Activated T-helper 1 cell treated with anti-CD3 and anti-CD28 coated beads, Interleukin-12 subunit alpha, Interleukin-12 subunit beta, Interleukin-2, Interleukin-4 antibody, amounts not matched to agents 30 ng/mL and 10 ng/mL and 1 ng/mL, durations not matched to agents 14 hours and 24 hours and 36 hours (primary cell): ENCODE measurements at regions of chr2 and their contacts with region 1.

Region 1: GRCh38 chr2:118046634-118047210 is 32.9 kb upstream of the CCDC93 start:
- DNase-seq: no peak
- H3K4me3 Mint-ChIP-seq: no peak overlapping the region
- H3K27ac Mint-ChIP-seq: no peak overlapping the region
- H3K4me1 Mint-ChIP-seq: peaks cover 6% of the 10 kb centered on the region
- H3K27me3 Mint-ChIP-seq: peaks cover 15% of the 10 kb centered on the region

Region 2: GRCh38 chr2:117972425-117973138 is 74.1 kb before region 1 on chr2:
- intact Hi-C with region 1: no loop called
- DNase-seq: no peak
- H3K4me3 Mint-ChIP-seq: no peak overlapping the region
- H3K27ac Mint-ChIP-seq: peak overlapping the region; percentile 5
- H3K4me1 Mint-ChIP-seq: no peaks in the 10 kb centered on the region
- H3K27me3 Mint-ChIP-seq: no peaks in the 10 kb centered on the region

Region 3: GRCh38 chr2:118061135-118061955 is 14.6 kb after region 1 on chr2:
- intact Hi-C with region 1: loop called (anchors 2 kb)
- DNase-seq: no peak
- H3K4me3 Mint-ChIP-seq: no peak overlapping the region
- H3K27ac Mint-ChIP-seq: no peak overlapping the region
- H3K4me1 Mint-ChIP-seq: peaks cover 13% of the 10 kb centered on the region
- H3K27me3 Mint-ChIP-seq: peaks cover 9% of the 10 kb centered on the region

Region 4: GRCh38 chr2:118148809-118149208 is 102.1 kb after region 1 on chr2:
- intact Hi-C with region 1: loop called (anchors 1 kb)
- DNase-seq: no peak
- H3K4me3 Mint-ChIP-seq: no peak overlapping the region
- H3K27ac Mint-ChIP-seq: no peak overlapping the region
- H3K4me1 Mint-ChIP-seq: no peaks in the 10 kb centered on the region
- H3K27me3 Mint-ChIP-seq: peaks cover 8% of the 10 kb centered on the region

Region 5: GRCh38 chr2:118186110-118186857 is 139.6 kb after region 1 on chr2:
- intact Hi-C with region 1: loop called (anchors 2 kb)
- DNase-seq: peak; percentile 83
- H3K4me3 Mint-ChIP-seq: peak overlapping the region; percentile 90
- H3K27ac Mint-ChIP-seq: peak overlapping the region; percentile 98
- H3K4me1 Mint-ChIP-seq: peaks cover 53% of the 10 kb centered on the region
- H3K27me3 Mint-ChIP-seq: no peaks in the 10 kb centered on the region

Region 6: DNA sequence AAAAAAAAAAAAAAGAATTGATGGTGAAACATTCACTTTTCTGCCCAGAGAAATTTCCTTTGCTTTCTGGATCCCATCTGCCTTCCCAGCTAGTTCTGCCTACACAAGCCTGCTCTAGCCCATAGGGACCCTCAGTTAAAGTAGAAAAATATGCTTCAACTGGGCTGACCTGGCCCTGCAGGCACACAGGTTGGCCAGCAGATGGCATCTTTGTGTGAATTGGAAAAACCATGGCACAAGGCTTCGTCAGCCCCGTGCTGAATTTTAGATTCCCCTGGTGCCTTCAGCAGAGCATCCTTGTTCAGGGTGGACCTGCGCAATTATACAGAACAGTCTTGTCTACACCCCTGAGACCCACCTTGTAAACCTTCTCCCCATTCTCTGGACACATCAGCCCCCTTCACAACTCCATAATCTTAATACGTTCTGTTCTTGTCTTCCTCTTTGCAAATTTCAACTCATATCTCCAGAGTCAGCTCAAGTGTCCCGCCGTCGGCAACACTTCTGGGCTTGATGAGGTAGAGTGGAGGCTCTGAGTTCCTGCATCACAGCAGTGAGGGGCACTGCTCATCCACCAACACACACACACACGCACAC is 156.1 kb after region 1 on chr2:
- intact Hi-C with region 1: loop called (anchors 1 kb)
- DNase-seq: peak; percentile 38
- H3K4me3 Mint-ChIP-seq: no peak overlapping the region
- H3K27ac Mint-ChIP-seq: no peak overlapping the region
- H3K4me1 Mint-ChIP-seq: peaks cover 7% of the 10 kb centered on the region
- H3K27me3 Mint-ChIP-seq: peaks cover 2% of the 10 kb centered on the region

Region 7: GRCh38 chr2:118221666-118222594 is 175.2 kb after region 1 on chr2:
- intact Hi-C with region 1: loop called (anchors 1 kb)
- DNase-seq: peak; percentile 40
- H3K4me3 Mint-ChIP-seq: no peak overlapping the region
- H3K27ac Mint-ChIP-seq: no peak overlapping the region
- H3K4me1 Mint-ChIP-seq: peaks cover 40% of the 10 kb centered on the region
- H3K27me3 Mint-ChIP-seq: peaks cover 54% of the 10 kb centered on the region

Region 8: DNA sequence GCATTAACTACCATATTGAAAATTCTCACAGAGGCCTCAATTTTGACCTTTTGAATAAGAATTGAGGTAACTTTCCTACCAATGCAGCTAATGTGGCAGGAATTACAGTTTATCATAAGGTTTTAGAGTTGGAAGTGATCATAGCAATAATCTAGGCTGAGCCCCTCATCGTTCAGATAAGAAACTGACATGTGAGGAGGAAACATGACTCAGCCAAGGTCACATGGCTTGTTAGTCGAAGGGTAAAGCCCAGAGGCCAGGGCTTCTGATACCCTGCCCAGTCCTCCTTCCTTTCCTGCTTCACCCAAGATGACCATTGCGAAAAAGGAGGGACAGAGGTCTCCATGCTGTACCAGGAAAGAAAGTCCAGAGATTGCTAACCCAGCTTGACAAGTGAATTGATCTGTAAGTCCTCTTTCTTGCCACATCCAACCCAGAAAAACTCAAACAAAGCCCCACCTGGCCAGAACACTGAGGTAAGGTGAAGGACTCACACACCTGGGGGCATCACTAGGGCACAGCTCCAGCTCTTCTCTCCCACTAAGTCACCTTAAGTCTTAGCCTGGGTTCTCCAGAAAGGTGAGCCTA is 625.9 kb after region 1 on chr2:
- intact Hi-C with region 1: no loop called
- DNase-seq: no peak
- H3K4me3 Mint-ChIP-seq: no peak overlapping the region
- H3K27ac Mint-ChIP-seq: no peak overlapping the region
- H3K4me1 Mint-ChIP-seq: no peaks in the 10 kb centered on the region
- H3K27me3 Mint-ChIP-seq: peaks cover 2% of the 10 kb centered on the region

Region 9: GRCh38 chr2:118855451-118856279 is 808.9 kb after region 1 on chr2:
- intact Hi-C with region 1: loop called (anchors 1 kb)
- DNase-seq: peak; percentile 71
- H3K4me3 Mint-ChIP-seq: peak overlapping the region; percentile 66
- H3K27ac Mint-ChIP-seq: peak overlapping the region; percentile 65
- H3K4me1 Mint-ChIP-seq: peaks cover 4% of the 10 kb centered on the region
- H3K27me3 Mint-ChIP-seq: peaks cover 81% of the 10 kb centered on the region